Left ventricle myocardium superior (tissue), 1 donor: ENCODE measurements at regions of chr17 and their contacts with region 1.

Region 1: GRCh38 chr17:72187556-72187955 is 66.7 kb downstream of the SOX9 start:
- DNase-seq: peak; percentile 79
- ATAC-seq: peak; percentile 60

Region 2: GRCh38 chr17:72120642-72121163 is 66.9 kb before region 1 on chr17 and contains the start of gene SOX9:
- intact Hi-C with region 1: loop called (anchors 10 kb)
- DNase-seq: peak; percentile 89
- ATAC-seq: peak; percentile 89
- total RNA-seq, gene SOX9: 7.3 TPM

Region 3: DNA sequence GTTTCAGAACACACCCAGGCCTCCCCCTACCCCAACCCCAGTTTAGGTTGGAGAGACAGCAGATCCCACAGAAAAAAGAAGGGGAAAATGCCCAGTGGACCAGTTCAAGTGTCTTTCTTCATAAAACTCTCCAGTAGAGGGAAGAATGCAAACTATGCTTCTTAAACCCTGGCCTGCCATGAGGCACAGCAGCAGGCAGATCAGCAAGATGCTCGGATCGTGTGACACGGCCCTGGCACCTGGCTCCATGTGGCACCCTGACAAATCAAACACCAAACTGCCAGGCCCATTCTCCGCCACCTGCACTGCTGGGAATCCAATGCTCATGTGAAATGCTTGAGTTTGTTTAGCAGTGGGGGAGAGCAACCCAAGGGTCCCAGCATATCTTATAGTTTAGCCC is 100.0 kb after region 1 on chr17:
- intact Hi-C with region 1: no loop called
- DNase-seq: no peak
- ATAC-seq: no peak

Region 4: GRCh38 chr17:72338847-72339790 is 151.6 kb after region 1 on chr17:
- intact Hi-C with region 1: no loop called
- DNase-seq: peak; percentile 28
- ATAC-seq: peak; percentile 69